ENCODE measurements at regions of chr7 and their contacts with region 1.

Region 1: GRCh38 chr7:64320547-64321513 is 7.1 kb downstream of the ZNF736 start:
- DNase-seq: no peak
- H3K4me3 Mint-ChIP-seq: no peak overlapping the region
- H3K27ac Mint-ChIP-seq: no peak overlapping the region
- H3K4me1 Mint-ChIP-seq: no peaks in the 10 kb centered on the region
- H3K27me3 Mint-ChIP-seq: no peaks in the 10 kb centered on the region
- CTCF ChIP-seq: no peak

Region 2: DNA sequence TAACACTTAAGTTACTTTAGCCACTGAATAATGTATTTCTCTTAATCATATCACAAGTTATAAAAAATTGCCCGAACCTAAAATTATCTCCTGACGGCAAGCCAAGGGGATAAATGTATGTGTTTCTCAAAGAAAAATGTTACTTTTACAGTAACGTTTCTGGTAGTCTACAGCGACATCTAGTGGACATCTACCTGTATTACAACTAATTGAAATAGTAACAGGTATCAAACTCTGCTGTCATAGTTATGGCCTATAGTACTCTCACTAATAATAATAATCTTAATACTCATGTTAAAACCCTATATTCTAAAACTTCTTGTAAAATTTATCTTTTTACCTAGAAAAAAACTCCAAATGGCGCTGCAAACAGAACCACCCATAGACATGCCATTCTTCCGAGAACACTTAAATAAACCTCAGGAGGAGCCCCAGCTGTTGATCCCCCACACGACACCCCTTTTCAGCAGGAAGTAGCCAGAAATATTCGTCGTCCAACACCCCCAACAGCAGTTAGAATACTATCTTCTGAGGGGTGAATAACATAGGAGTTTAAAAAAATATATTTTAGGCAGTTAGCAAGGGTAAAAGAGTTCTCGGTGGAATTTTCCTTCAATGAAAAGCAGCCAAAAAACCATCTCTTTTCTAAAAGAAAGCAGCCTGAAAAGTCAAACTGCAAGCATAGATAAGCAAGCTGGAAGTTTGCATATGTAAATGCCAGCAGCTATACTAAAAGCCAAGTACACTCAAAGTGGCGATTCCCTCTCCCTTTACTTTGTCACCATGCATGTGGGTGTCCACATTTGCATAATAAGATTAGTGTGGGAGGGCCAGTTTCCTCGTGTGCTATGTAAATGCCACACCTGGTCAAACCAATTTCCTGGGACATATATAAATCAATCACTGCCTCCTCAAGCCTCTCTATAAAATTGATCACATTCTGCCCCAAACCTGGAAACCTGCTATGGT is 304.6 kb after region 1 on chr7:
- CTCF ChIA-PET with region 1: interaction called, 12 read pairs
- POLR2A ChIA-PET with region 1: interaction called, 4 read pairs
- intact Hi-C with region 1: no loop called
- DNase-seq: no peak
- H3K4me3 Mint-ChIP-seq: no peak overlapping the region
- H3K27ac Mint-ChIP-seq: no peak overlapping the region
- H3K4me1 Mint-ChIP-seq: no peaks in the 10 kb centered on the region
- H3K27me3 Mint-ChIP-seq: no peaks in the 10 kb centered on the region
- CTCF ChIP-seq: peak; percentile 51